Vagina (tissue), 2 donors: ENCODE measurements at regions of chr14 and their contacts with region 1.

Region 1: DNA sequence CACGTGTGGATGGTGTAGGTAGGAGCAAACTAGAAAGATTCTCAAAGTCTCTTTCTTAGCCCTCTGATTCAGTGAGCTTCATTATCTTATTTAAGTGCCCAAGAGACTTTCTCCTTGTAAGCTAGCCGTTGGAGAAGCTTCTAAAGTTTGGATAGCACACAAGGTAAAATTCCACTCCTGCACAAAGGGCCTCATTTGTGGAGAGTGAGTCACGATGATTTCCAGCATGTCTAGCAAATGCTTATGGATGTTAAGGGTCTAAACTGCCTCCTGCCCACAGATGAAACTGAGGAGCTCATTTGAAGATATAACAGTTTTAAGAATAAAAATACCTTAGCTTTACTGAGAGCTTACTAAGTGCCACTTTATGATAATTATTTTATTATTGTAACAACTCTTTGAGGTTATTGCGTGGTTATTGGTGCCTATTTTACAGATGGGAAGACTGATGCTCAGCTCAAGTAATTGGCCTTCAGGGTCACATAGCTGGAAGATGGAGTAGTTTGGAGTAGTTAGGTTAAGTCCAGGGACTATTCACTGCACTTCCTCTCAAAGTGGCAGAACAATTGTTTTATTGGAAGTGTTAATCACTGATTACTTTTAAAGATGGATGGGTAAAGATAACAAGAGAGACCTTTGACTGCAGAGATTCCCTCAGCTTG is 78.7 kb upstream of the HIF1A start:
- DNase-seq: no peak
- H3K4me3 ChIP-seq: no peak overlapping the region
- H3K27ac ChIP-seq: no peak overlapping the region
- H3K4me1 ChIP-seq: peaks cover 16% of the 10 kb centered on the region
- H3K27me3 ChIP-seq: no peaks in the 10 kb centered on the region
- CTCF ChIP-seq: no peak
- POLR2A ChIP-seq: no peak

Region 2: DNA sequence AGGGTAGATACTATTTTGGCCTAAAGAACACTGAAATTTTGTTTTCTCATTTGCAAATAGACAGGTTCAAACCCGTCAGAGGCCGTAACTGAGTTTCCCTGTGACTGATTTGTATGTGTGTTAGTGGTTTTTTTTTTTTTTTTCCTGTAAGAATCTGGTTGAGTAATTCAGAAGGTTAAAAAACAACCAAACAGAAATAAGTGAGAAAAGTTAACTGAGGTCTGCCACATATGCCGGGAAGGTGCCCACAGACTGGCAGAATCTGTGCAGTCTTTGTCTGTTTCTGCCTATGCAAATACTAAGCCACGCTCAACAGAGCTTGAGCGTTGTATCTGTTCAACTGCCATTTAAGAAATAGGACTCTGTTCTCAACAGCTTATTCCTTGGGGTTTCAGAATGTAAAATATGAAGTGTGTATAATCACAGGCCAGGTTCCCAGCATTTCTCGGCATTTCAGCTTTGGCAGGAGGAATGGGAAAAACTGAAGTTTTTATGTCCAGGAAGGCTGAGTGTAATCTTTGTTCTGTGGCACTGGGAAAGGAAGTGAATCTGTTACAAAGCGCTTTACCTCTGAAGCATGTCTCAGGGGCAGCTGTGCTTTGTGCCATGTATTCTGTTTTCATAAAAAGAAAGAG is 113.4 kb before region 1 on chr14:
- intact Hi-C with region 1: no loop called
- DNase-seq: no peak
- H3K4me3 ChIP-seq: no peak overlapping the region
- H3K27ac ChIP-seq: peak overlapping the region; percentile 46
- H3K4me1 ChIP-seq: peaks cover 42% of the 10 kb centered on the region
- H3K27me3 ChIP-seq: no peaks in the 10 kb centered on the region
- CTCF ChIP-seq: no peak
- POLR2A ChIP-seq: no peak

Region 3: DNA sequence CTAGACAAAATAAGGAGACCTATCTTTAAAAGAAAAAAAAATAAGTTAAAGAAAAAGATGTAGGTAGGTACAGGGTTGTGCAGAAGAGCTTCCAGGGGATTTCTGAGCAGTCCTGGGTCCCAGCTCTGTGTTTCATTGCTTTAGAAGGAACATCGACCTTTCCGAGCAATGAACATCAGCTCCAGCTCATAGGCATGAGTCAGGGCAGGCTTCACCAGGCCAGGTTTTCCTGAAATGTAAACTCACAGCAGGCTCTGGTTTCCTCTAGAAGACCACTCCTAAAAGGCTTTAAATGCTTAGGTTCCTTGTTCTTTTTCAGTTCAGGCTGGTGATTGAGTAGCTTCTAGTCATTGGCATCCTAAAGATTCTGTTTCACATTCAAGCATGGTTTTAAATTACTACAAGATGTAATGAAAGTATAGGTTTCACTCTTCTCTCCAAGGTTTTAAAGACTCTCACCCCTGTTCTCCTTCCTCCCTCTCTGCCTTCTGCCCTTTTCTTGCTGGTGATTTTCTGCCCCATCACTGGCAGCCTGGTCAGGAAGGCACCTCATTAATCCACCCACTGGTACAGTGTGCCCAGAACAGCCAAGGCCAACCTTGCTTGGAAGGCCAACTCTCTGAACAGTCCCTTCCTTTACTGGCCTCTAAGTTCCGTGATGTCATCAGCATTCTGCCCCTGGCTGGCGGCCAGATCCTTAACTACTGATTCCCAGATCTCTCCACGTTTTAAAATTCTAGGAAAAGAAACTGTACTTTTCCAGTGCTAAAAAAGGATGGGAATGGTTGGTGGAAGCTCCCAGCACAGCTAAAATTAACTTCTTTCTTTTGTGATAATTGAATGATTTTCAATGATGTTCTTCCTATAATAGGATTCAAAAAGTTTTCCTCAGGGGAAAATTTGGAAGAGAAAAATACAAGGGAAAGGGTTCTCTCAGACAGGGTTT is 30.8 kb before region 1 on chr14:
- intact Hi-C with region 1: no loop called
- DNase-seq: no peak
- H3K4me3 ChIP-seq: no peak overlapping the region
- H3K27ac ChIP-seq: peak overlapping the region; percentile 76
- H3K4me1 ChIP-seq: peaks cover 40% of the 10 kb centered on the region
- H3K27me3 ChIP-seq: no peaks in the 10 kb centered on the region
- CTCF ChIP-seq: no peak
- POLR2A ChIP-seq: no peak

Region 4: DNA sequence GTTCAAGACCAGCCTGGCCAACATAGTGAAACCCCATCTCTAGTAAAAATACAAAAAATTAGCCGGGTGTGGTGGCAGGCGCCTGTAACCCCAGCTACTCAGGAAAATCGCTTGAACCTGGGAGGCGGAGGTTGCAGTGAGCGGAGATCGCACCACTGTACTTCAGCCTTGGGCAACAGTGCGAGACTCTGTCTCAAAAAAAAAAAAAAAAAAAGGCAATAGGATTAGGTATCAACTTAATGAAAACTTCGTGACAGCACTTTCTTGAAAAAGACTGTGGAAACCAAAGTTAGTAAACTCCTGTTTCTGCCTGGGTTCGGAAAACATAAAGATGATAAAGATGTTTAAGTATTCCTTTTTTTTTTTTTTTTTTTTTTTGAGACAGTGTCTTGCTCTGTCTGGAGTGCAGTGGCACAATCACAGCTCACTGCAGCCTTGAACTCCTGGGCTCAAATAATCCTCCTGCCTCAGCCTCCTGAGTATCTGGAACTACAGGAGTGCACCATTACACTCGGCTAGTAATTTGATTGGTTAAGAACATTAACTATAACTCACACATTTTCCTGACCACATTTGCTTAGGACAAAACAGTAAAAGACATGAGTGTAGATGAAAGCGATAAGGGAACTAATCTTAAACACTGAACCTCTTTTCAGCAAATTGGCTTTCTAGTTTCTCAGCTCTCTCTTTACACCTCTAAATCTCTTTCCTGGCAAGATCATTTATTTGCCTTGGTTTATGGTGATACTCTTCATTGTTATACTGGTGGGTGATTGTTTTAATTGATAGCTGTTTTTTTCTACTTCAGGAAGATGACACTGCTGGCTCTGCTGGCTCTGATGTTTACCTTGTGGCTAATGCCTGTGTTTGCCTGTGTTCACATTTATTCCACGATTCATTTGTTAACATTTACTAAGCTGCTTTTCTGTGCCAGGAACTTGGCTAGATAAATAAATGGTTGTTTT is 94.5 kb after region 1 on chr14:
- intact Hi-C with region 1: loop called (anchors 10 kb)
- DNase-seq: no peak
- H3K4me3 ChIP-seq: no peak overlapping the region
- H3K27ac ChIP-seq: no peak overlapping the region
- H3K4me1 ChIP-seq: peaks cover 74% of the 10 kb centered on the region
- H3K27me3 ChIP-seq: no peaks in the 10 kb centered on the region
- CTCF ChIP-seq: no peak
- POLR2A ChIP-seq: no peak

Region 5: DNA sequence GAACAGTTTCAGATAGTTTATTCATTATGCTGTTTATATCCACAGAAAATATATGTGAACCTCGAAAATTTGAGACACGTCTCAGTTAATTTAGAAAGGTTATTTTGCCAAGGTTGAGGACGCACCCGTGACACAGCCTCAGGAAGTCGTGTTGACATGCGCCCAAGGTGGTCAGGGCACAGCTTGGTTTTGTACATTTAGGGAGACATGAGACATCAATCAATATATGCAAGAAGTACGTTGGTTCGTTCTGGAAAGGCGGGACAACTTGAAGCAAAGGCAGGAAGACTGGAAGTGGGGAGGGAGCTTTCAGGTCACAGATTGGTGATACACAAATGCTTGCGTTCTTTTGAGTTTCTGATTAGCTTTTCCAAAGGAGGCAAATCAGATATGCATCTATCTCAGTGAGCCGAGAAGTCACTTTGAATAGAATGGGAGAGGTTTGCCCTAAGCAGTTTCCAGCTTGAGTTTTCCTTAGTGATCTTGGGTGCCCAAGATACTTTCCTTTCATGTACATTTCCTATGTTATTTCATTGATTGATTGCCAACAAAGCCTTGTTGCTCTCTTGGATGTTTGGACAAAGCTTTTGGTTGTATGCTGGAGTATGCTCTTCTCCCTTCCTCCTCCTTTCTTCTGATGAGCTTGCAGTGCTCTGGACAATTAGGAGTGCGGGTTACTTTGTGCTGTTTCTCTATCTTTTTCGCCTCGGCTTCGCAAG is 148.7 kb after region 1 on chr14:
- intact Hi-C with region 1: no loop called
- DNase-seq: no peak
- H3K4me3 ChIP-seq: peak overlapping the region in 1 of 2 donors; percentile 1
- H3K27ac ChIP-seq: peak overlapping the region; percentile 3
- H3K4me1 ChIP-seq: peaks cover 45% of the 10 kb centered on the region
- H3K27me3 ChIP-seq: no peaks in the 10 kb centered on the region
- CTCF ChIP-seq: no peak
- POLR2A ChIP-seq: no peak